Heart right ventricle (tissue), 16 donors: ENCODE measurements at regions of chr17 and their contacts with region 1.

Region 1: DNA sequence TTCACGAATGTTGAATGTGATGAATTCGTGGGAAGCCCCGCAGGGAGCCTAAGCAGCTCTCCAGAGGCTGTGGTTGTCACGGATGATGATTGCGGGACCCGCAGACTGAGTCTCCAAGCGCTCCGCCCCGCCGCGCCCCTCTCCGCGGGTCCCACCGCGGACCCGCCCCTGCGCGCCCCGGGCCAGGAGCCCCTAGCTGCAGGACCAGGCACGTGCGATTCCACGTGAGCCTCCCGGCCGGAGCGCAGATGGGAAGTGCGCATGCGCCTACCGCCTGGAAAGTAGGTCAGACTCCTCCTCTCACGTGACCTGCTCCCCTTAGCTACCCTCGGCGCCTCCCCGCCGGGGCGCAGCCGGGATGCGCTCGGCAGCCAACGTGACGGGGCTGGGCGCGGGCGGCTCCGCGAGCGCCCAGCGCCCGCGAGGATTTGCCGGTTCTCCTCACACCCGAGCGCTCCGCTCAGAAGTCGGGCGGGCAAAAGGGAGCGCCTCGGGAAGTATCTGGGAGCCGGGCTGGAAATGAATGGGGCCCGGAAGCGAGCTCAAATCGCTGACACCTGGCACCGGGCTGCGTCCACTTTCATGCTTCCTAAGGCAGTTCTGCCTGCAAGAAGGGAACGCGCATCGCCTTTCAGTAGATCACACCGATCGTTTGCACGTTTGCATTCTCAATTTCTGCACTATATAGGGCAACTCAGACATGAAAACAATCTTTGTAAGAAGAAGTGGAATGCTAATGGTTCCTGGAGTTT is 26.4 kb upstream of the HLF start:
- DNase-seq: peak; percentile 94 to 95
- ATAC-seq: peak; percentile 99 to 100 (median 100)
- H3K4me3 ChIP-seq: peak overlapping the region; percentile 29 to 69 (median 53)
- H3K27ac ChIP-seq: peak overlapping the region; percentile 6 to 87 (median 70)
- H3K4me1 ChIP-seq: peaks cover 0 to 21% (median 8%) of the 10 kb centered on the region in 9 donors
- H3K27me3 ChIP-seq: peaks cover 0 to 26% (median 0%) of the 10 kb centered on the region in 7 donors
- CTCF ChIP-seq: peak in 2 of 9 donors; percentile 16 to 23

Region 2: DNA sequence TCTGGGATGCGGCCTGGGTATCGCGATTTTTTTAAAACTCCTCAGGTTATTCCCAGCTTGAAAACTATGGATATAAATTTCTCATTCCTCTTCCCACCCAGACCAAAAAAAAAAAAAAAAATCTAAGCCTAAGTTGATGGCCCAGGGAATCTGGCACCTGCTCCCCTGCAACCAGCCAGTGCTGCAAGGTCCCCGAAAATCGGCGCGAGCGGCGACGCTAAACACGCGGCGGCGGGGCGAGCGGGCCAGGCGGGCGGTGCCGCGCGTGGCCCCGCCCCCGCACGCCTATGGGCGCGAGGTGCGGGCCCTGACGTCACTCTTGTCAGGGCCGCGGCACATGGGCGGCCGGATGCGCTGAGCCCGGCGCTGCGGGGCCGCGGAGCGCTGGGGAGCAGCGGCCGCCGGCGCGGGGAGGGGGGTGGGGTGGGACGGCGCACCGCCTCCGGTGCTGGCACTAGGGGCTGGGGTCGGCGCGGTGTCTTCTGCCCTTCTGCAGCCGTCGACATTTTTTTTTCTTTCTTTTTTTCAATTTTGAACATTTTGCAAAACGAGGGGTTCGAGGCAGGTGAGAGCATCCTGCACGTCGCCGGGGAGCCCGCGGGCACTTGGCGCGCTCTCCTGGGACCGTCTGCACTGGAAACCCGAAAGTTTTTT is 26.4 kb after region 1 on chr17 and contains the start of gene HLF:
- intact Hi-C with region 1: loop called in 6 of 10 experiments (anchors 1 to 2 kb)
- DNase-seq: peak; percentile 82 to 85
- ATAC-seq: peak; percentile 87 to 99 (median 96)
- H3K4me3 ChIP-seq: peak within 1 kb of the TSS; percentile 59 to 78 (median 64)
- H3K27ac ChIP-seq: peak within 1 kb of the TSS; percentile 48 to 89 (median 84)
- H3K4me1 ChIP-seq: peaks cover 4 to 58% (median 32%) of the 10 kb centered on the region in 9 donors
- H3K27me3 ChIP-seq: peaks cover 0 to 72% (median 5%) of the 10 kb centered on the region in 7 donors
- CTCF ChIP-seq: no peak
- total RNA-seq, gene HLF: 11.2 to 42.5 (median 31.3) TPM

Region 3: DNA sequence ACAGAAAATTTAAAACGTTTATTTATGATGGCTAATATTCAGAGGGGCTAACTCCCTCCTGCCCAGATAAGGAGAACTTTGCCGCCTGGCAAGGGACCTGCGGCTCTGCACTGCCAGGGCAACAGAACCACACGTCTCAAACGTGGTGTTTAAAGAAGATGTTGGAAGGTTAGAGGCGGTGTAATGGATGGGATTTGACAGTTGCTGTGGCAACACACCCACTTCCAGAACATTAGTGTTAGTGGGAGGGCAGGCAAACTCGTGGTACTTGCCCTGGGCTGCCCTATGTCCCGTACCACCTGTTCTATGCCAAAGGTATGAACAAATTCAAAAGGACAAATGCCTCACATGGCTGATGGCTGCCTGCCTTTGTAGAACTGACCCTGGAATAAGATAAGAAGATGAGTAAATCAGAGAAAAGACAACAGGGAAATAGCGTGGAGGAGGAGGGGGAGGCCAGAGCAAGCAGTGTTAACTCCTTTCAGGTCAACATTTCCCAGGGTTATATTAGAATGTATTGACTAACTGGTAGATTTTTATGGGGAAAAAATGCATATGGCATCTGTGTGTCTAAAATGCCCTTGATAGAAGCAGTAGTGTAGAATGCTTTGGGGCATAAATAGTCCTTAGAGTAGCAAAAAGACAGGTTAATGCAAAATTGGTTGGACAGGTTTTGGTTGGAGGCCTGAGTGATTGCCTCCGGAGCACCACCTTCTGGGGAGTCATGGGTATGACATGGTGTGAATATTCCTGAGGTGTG is 57.2 kb after region 1 on chr17:
- intact Hi-C with region 1: loop called in 5 of 10 experiments (anchors 1 to 10 kb)
- DNase-seq: peak in 1 of 2 donors; percentile 42
- ATAC-seq: peak; percentile 73 to 92 (median 84)
- H3K4me3 ChIP-seq: no peak overlapping the region
- H3K27ac ChIP-seq: peak overlapping the region in 5 of 10 donors; percentile 25 to 42 (median 38)
- H3K4me1 ChIP-seq: peaks cover 0 to 30% (median 12%) of the 10 kb centered on the region in 9 donors
- H3K27me3 ChIP-seq: no peaks in the 10 kb centered on the region
- CTCF ChIP-seq: peak; percentile 80 to 89 (median 87)

Region 4: DNA sequence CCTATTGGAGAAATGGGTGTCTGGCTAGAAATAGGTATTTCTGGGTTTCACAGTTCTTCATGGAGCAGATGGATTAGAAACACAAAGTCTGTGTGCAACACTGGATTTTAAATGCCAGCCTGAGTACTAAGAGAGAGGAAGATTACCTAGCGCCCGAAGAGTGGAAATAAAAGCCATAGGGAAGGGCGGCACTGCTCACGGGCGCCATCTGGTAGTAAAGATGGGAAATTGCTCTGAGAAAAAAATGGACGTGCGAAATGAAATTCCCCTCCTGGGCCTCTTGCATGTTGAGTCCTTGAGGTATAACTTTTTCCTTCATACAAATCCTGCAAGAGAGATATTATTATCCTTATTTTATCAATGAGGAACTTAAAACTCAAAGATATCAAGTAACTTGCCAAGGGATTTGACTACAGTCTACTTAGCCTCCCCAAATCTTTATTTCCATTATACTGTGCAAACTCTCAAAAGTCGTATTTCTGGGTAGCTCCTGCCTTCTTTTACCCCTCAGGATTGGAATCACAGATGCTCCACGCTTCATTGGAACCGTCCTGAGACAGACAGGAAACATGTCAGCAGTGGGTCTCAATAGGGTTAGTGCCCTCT is 110.5 kb after region 1 on chr17:
- intact Hi-C with region 1: loop called in 2 of 10 experiments (anchors 10 kb)
- DNase-seq: peak; percentile 17 to 33
- ATAC-seq: peak in 7 of 8 donors; percentile 57 to 76 (median 67)
- H3K4me3 ChIP-seq: no peak overlapping the region
- H3K27ac ChIP-seq: no peak overlapping the region
- H3K4me1 ChIP-seq: peaks cover 0 to 7% (median 0%) of the 10 kb centered on the region in 9 donors
- H3K27me3 ChIP-seq: no peaks in the 10 kb centered on the region
- CTCF ChIP-seq: peak; percentile 61 to 93 (median 88)

Region 5: GRCh38 chr17:55356434-55357328 is 118.3 kb after region 1 on chr17:
- intact Hi-C with region 1: loop called in 1 of 10 experiments (anchors 10 kb)
- DNase-seq: peak; percentile 23 to 68
- ATAC-seq: peak in 7 of 8 donors; percentile 64 to 83 (median 74)
- H3K4me3 ChIP-seq: no peak overlapping the region
- H3K27ac ChIP-seq: no peak overlapping the region
- H3K4me1 ChIP-seq: no peaks in the 10 kb centered on the region
- H3K27me3 ChIP-seq: no peaks in the 10 kb centered on the region
- CTCF ChIP-seq: peak; percentile 41 to 86 (median 79)